ENCODE measurements at regions of chr1 and their contacts with region 1.

Region 1: DNA sequence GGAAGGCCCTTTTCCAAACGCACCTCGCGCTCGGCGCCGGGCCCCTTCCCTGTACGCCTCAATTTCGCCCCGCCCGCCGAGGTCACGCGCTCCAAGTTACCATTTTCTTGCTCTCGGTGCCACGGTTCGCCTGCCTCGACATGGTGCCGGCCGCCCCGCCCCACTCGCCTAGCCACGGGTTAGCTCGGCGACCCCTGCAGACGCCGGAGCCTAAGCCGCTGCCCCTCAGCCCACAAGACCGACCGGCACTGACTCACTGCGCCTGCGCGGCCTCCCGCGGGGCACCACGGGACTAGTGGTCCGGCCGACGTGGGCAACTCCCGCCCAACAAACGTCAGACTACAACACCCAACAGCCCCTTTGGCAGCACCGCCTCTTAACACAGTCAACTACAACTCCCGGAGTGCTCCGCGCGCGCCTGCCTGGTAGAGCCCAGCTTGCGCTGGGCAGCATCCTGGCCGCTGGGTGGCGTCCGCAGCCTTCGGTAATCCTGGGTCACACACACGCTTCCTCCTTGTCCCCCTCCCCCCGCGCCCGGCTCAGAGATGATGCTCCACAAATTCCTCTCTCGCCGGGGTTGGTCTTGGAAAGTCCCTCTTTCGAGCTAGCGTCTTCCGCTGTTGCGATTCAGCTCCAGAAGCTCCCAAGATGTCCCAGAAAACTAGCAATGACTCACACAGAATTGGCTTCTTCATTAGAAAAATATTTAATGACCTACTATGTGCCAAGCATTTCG is at the start of gene TRAPPC3:
- DNase-seq: peak; percentile 100
- ATAC-seq: peak; percentile 93
- H3K4me3 Mint-ChIP-seq: peak within 1 kb of the TSS; percentile 95
- H3K27ac Mint-ChIP-seq: peak within 1 kb of the TSS; percentile 94
- H3K4me1 Mint-ChIP-seq: peaks cover 67% of the 10 kb centered on the region
- H3K27me3 Mint-ChIP-seq: no peaks in the 10 kb centered on the region
- total RNA-seq, gene TRAPPC3: 43.8 to 53.8 TPM

Region 2: DNA sequence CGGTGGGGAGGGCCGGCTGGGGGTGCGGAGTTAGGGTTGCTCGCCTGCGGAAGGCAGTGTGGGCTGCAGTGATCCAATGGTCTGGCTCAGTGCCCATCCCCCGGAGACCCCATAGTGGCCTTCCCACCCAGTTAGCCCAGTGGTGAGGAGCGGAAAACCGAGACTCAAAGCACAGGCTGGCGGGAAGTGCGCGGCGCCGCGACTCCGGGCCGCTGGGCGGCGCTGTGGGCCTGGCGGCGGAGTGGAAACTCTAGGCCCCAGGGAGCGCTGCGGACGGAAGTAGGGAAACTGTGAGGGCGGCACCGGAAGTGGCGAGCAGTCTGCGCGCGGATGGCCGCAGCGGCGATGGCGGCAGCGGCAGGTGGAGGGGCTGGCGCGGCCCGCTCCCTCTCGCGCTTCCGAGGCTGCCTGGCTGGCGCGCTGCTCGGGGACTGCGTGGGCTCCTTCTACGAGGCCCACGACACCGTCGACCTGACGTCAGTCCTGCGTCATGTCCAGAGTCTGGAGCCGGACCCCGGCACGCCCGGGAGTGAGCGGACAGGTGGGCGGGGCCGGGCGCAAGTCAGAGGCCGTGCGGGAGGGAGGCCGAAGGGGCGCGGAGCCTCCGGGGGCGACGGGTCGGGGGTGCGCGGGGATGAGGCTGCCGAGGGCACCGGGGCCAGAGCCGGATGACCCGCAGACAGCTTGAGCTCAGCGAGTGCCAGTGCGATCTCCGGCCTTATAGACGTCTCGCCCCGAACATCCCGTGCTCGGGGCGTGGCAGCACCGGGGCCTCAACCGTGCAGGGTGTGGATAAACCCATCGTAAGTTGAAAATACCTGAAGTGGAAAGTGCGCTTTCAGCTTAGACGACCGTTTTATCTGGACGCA is 60.6 kb before region 1 on chr1 and contains the start of gene ADPRS:
- CTCF ChIA-PET with region 1: interaction called, 5 read pairs
- POLR2A ChIA-PET with region 1: interaction called, 9 read pairs
- intact Hi-C with region 1: loop called (anchors 1 kb)
- DNase-seq: peak; percentile 95
- ATAC-seq: peak; percentile 89
- H3K4me3 Mint-ChIP-seq: peak within 1 kb of the TSS; percentile 88
- H3K27ac Mint-ChIP-seq: peak within 1 kb of the TSS; percentile 96
- H3K4me1 Mint-ChIP-seq: peaks cover 19% of the 10 kb centered on the region
- H3K27me3 Mint-ChIP-seq: peaks cover 16% of the 10 kb centered on the region
- total RNA-seq, gene ADPRS: 34.0 to 43.9 TPM

Region 3: DNA sequence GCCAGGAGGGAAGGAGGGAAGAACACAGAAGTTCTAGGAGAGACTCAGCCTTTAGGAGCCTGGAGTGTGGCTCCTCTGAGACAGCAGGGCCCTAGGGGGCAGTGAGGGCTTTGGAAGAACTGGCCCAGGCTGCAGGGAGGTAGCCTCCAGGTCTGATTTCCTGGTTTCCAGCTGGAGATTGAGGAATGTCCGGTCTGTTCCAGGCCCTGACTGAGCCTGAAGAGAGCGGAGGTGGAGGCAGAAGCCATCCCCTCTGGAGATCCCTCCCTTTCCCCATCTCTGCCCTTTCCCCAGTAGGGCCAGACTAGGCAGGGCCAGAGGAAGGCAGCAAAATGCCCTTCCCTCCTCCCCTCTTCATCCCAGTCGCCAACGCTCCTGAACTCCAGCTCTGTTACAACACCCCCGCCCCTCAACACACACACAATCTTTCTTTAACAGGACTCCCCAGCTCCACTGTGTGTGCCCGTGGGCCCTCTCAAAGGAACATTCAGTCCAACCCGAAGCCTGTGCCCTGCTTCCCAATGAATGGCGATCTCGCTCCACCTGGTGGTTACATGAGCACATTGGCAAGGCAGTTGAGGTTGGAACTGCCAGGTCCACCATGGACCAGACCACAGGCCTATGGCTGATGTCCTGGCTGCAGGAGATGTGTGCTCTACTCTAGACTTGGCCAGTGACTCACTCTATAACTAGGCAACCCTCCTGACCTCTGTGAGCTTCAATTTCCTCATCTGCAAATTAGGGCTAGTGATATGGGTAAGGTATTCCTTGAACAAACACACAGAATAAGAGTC is 38.6 kb after region 1 on chr1:
- CTCF ChIA-PET with region 1: interaction called, 52 read pairs
- POLR2A ChIA-PET with region 1: interaction called, 9 read pairs
- intact Hi-C with region 1: loop called (anchors 1 kb)
- DNase-seq: peak; percentile 87
- ATAC-seq: peak; percentile 99
- H3K4me3 Mint-ChIP-seq: no peak overlapping the region
- H3K27ac Mint-ChIP-seq: peak overlapping the region; percentile 56
- H3K4me1 Mint-ChIP-seq: peaks cover 4% of the 10 kb centered on the region
- H3K27me3 Mint-ChIP-seq: no peaks in the 10 kb centered on the region

Region 4: GRCh38 chr1:36306902-36307456 is 157.6 kb after region 1 on chr1:
- CTCF ChIA-PET with region 1: interaction called, 4 read pairs
- POLR2A ChIA-PET with region 1: interaction called, 4 read pairs
- intact Hi-C with region 1: loop called in 1 of 2 experiments (anchors 1 kb)
- DNase-seq: peak; percentile 96
- ATAC-seq: peak; percentile 91
- H3K4me3 Mint-ChIP-seq: peak overlapping the region; percentile 98
- H3K27ac Mint-ChIP-seq: peak overlapping the region; percentile 96
- H3K4me1 Mint-ChIP-seq: peaks cover 45% of the 10 kb centered on the region
- H3K27me3 Mint-ChIP-seq: no peaks in the 10 kb centered on the region

Region 5: DNA sequence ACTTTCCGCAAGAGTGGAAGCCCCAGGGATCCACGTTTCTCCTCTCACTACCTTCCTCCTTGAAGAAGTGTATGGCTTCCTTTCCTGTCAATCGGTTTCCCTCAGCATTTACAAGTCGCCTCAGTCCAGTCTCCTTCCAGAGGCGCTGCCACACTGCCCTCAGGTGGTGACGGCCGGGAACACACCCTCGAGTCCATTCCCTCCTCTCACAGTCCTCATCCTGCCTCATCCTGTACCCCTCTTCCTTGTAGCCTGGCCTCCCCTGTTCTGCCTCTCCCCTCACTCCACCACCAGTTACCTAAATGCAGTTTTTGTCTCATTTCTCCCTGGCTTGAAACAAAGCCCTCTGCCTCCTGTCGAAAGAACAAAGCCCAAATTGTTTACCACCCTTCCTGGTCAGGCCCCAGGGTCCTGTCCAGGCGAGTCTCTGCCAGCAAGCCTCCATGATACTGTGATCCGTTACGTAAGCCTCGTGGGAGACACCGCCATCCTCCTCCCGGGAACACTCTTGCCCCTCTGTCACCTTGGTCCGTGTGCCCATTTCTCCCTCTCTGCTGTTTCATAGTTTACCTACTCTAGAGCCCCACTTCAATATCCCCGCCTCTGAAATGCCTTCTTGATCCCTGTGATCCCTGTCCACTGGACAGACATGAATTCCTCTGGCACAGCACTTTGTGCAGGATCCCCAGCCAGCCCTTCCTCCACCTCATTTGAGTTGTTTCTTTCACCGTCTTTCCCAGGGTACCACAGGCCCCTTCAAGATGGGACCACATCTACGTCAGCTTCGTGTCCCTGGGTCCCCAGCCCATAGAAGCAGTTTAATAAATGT is 271.6 kb after region 1 on chr1:
- CTCF ChIA-PET with region 1: interaction called, 3 read pairs
- POLR2A ChIA-PET with region 1: no interaction called
- intact Hi-C with region 1: loop called (anchors 1 to 2 kb)
- DNase-seq: peak; percentile 95
- ATAC-seq: peak; percentile 94
- H3K4me3 Mint-ChIP-seq: no peak overlapping the region
- H3K27ac Mint-ChIP-seq: peak overlapping the region; percentile 91
- H3K4me1 Mint-ChIP-seq: peaks cover 19% of the 10 kb centered on the region
- H3K27me3 Mint-ChIP-seq: no peaks in the 10 kb centered on the region

Region 6: GRCh38 chr1:37479255-37480124 is 1330.1 kb after region 1 on chr1:
- CTCF ChIA-PET with region 1: no interaction called
- POLR2A ChIA-PET with region 1: no interaction called
- intact Hi-C with region 1: loop called in 1 of 2 experiments (anchors 5 kb)
- DNase-seq: peak; percentile 96
- ATAC-seq: peak; percentile 52
- H3K4me3 Mint-ChIP-seq: peak overlapping the region; percentile 95
- H3K27ac Mint-ChIP-seq: peak overlapping the region; percentile 98
- H3K4me1 Mint-ChIP-seq: peaks cover 32% of the 10 kb centered on the region
- H3K27me3 Mint-ChIP-seq: no peaks in the 10 kb centered on the region

Measured in activated CD4-positive, alpha-beta T cell treated with anti-CD3 and anti-CD28 coated beads for 36 hours (primary cell).